Gastrocnemius medialis (tissue), 4 donors: ENCODE measurements at regions of chr13 and their contacts with region 1.

Region 1: GRCh38 chr13:109786457-109787134 is at the start of gene IRS2:
- DNase-seq: peak; percentile 94 to 95
- ATAC-seq: peak; percentile 83 to 87
- H3K4me3 ChIP-seq: peak within 1 kb of the TSS; percentile 74 to 86 (median 82)
- H3K27ac ChIP-seq: peak within 1 kb of the TSS; percentile 85 to 94 (median 89)
- H3K4me1 ChIP-seq: peaks cover 0 to 21% of the 10 kb centered on the region in 2 donors
- H3K27me3 ChIP-seq: peaks cover 0 to 3% (median 0%) of the 10 kb centered on the region in 3 donors
- CTCF ChIP-seq: no peak
- POLR2A ChIP-seq: peak; percentile 99
- total RNA-seq, gene IRS2: 23.8 to 65.6 (median 28.7) TPM

Region 2: GRCh38 chr13:108961542-108962125 is 825.0 kb before region 1 on chr13:
- in situ Hi-C with region 1: loop called in 3 of 4 experiments (anchors 25 kb)
- intact Hi-C with region 1: loop called (anchors 5 kb)
- DNase-seq: no peak
- ATAC-seq: peak; percentile 79 to 89
- H3K4me3 ChIP-seq: no peak overlapping the region
- H3K27ac ChIP-seq: no peak overlapping the region
- H3K4me1 ChIP-seq: no peaks in the 10 kb centered on the region
- H3K27me3 ChIP-seq: no peaks in the 10 kb centered on the region
- CTCF ChIP-seq: peak; percentile 58 to 87 (median 75)
- POLR2A ChIP-seq: no peak

Region 3: DNA sequence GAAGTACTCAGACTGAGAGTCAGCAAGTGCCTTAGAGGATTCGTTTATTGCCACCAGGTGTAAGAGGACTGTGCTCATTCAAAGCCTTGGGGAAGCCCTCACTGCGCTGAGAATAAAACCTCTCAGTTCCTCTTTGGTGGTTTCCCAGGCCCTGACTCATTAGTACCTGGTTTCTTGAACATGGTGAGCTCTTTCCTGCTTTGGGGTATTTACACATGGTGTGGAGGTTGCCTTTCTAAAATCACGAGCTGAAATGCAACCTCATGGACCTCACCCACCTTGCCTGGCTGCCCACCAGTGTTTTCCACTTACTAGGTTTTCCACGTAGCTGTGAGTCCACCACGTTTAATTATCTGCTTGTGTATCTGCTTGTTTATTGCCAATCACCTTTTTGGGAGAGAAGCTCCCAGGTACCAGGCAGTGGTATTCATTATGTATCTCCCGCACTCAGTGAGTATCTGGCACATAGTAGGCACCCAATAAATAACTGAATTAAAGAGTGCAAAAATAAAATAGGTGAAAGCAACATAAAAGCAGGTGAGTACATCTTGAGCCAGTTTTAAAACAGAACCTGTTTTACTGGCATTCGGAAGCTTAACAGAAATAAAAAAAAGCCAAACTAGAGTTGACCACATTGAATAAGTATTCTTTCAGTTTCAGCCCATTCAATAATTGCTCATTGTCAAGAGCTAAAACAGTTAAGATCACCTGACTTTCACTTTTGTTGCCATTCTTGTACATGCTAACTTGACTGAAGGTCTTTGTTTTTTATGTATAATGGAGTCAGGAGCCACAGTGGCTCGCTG is 624.1 kb before region 1 on chr13:
- in situ Hi-C with region 1: loop called in 1 of 4 experiments (anchors 25 kb)
- intact Hi-C with region 1: no loop called
- DNase-seq: no peak
- ATAC-seq: no peak
- H3K4me3 ChIP-seq: no peak overlapping the region
- H3K27ac ChIP-seq: no peak overlapping the region
- H3K4me1 ChIP-seq: peaks cover 0 to 3% of the 10 kb centered on the region in 2 donors
- H3K27me3 ChIP-seq: no peaks in the 10 kb centered on the region
- CTCF ChIP-seq: no peak
- POLR2A ChIP-seq: no peak

Region 4: DNA sequence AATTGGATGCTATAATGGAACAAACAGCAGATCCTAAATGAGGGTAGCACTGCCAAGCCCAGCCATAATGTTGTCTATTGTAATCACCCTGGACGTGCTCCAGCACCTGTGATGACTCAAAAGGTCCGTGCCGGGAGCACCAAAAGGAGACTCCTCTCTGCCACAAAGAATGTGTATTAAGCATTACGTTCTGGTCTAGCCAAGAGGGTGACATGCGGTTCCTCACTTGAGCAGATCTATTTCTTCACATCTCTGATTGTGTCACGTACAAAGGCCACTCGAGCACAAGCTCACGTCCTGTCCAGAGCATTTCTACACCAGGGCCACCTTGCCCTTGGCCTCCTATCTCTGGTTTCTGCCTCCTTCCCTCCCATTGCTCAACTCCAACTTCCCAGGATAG is 219.7 kb after region 1 on chr13:
- in situ Hi-C with region 1: no loop called
- intact Hi-C with region 1: loop called (anchors 5 kb)
- DNase-seq: peak; percentile 51 to 71
- ATAC-seq: peak; percentile 71 to 89
- H3K4me3 ChIP-seq: no peak overlapping the region
- H3K27ac ChIP-seq: peak overlapping the region; percentile 24 to 73 (median 42)
- H3K4me1 ChIP-seq: peaks cover 0 to 4% of the 10 kb centered on the region in 2 donors
- H3K27me3 ChIP-seq: no peaks in the 10 kb centered on the region
- CTCF ChIP-seq: no peak
- POLR2A ChIP-seq: no peak

Region 5: GRCh38 chr13:110138010-110138699 is 351.6 kb after region 1 on chr13:
- in situ Hi-C with region 1: no loop called
- intact Hi-C with region 1: loop called (anchors 1 kb)
- DNase-seq: peak; percentile 72 to 75
- ATAC-seq: peak; percentile 67 to 68
- H3K4me3 ChIP-seq: peak overlapping the region; percentile 53 to 81 (median 60)
- H3K27ac ChIP-seq: peak overlapping the region; percentile 85 to 95 (median 89)
- H3K4me1 ChIP-seq: peaks cover 41 to 43% of the 10 kb centered on the region in 2 donors
- H3K27me3 ChIP-seq: no peaks in the 10 kb centered on the region
- CTCF ChIP-seq: peak in 2 of 5 experiments; percentile 14 to 17
- POLR2A ChIP-seq: peak; percentile 55 to 65